ENCODE measurements at regions of chr15 and their contacts with region 1.

Region 1: DNA sequence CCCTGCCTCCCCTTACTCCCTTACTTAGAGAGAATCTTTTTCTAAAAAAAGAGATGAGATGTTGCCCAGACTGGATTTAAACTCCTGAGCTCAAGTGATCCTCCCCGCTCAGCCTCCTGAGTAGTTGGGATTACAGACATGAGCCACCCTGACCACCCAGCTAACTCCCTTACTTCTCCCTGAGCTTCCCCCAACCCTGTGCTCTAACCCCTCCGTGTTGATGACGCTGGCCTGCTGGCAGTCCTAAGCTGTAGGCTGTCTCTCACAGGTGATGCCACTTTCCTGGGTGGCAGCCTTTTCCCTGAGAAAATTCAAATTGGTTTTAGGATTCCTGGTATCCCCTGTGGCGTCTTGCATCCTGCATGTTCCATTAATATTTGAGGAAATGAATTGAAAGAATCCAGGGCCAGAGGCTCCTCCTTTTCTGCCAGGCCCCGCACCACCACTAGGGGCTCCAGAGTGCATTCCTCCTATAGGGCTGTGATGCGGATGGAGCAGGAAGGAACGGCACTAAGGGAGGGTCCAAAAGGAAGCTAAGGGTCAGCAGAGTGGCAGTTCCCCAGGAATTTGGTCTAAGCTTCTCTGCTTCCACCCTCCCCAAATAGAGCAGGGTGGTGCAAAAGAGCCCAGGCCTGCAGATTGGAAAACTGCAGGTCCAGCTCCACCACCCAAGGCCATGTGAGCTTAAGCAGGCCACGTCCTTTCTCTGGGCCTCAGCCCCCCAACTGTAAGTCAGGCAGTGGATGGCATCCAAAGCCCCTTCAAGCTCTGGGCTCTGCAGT is 101.1 kb downstream of the DAPK2 start:
- DNase-seq: peak; percentile 80
- ATAC-seq: peak; percentile 87
- H3K4me3 Mint-ChIP-seq: no peak overlapping the region
- H3K27ac Mint-ChIP-seq: no peak overlapping the region
- H3K4me1 Mint-ChIP-seq: peaks cover 14% of the 10 kb centered on the region
- H3K27me3 Mint-ChIP-seq: no peaks in the 10 kb centered on the region

Region 2: GRCh38 chr15:63905558-63906265 is 39.5 kb before region 1 on chr15:
- CTCF ChIA-PET with region 1: interaction called, 16 read pairs
- POLR2A ChIA-PET with region 1: no interaction called
- DNase-seq: peak; percentile 40
- ATAC-seq: peak; percentile 83
- H3K4me3 Mint-ChIP-seq: no peak overlapping the region
- H3K27ac Mint-ChIP-seq: peak overlapping the region; percentile 88
- H3K4me1 Mint-ChIP-seq: peaks cover 27% of the 10 kb centered on the region
- H3K27me3 Mint-ChIP-seq: no peaks in the 10 kb centered on the region

Region 3: DNA sequence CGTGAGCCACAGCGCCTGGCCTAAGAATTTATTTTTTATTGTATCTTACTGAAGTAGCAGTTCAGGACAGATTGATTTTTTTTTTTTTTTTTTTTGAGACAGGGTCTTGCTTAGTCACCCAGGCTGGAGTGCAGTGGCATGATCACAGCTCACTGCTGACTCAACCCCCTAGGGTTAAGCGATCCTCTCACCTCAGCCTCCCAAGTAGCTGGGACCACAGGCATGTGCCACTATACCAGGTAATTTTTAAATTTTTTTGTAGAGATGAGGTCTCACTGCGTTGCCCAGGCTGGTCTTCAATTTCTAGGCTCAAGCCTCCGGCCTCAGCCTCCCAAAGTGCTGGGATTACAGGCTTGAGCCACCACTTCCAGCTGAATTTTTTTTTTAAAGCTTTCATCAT is 11.7 kb before region 1 on chr15:
- CTCF ChIA-PET with region 1: interaction called, 36 read pairs
- POLR2A ChIA-PET with region 1: no interaction called
- DNase-seq: no peak
- ATAC-seq: no peak
- H3K4me3 Mint-ChIP-seq: no peak overlapping the region
- H3K27ac Mint-ChIP-seq: no peak overlapping the region
- H3K4me1 Mint-ChIP-seq: peaks cover 13% of the 10 kb centered on the region
- H3K27me3 Mint-ChIP-seq: peaks cover 2% of the 10 kb centered on the region

Region 4: GRCh38 chr15:63983061-63983711 is 38.0 kb after region 1 on chr15:
- CTCF ChIA-PET with region 1: interaction called, 16 read pairs
- POLR2A ChIA-PET with region 1: no interaction called
- DNase-seq: no peak
- ATAC-seq: no peak
- H3K4me3 Mint-ChIP-seq: no peak overlapping the region
- H3K27ac Mint-ChIP-seq: no peak overlapping the region
- H3K4me1 Mint-ChIP-seq: no peaks in the 10 kb centered on the region
- H3K27me3 Mint-ChIP-seq: no peaks in the 10 kb centered on the region

Region 5: DNA sequence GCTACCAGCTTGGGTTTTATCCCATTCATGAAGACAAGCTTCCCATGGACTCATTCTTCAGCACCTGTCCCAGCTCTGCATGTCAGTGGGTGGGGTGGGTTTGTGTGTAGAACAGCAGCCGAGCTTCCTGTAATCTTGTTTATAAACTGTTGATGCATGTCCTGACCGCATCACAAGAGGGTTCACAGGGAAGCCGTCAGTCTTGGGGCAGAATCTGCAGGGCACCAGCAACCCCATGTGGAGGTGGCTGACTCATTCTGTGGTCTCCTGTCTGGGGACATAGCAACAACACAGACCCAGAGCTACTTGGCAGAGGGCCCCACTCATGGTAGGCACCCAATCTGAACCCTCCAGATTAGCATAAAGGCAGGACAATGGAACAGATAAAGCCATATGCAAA is 65.5 kb after region 1 on chr15:
- CTCF ChIA-PET with region 1: interaction called, 16 read pairs
- POLR2A ChIA-PET with region 1: no interaction called
- DNase-seq: peak; percentile 92
- ATAC-seq: peak; percentile 100
- H3K4me3 Mint-ChIP-seq: peak overlapping the region; percentile 7
- H3K27ac Mint-ChIP-seq: peak overlapping the region; percentile 75
- H3K4me1 Mint-ChIP-seq: peaks cover 37% of the 10 kb centered on the region
- H3K27me3 Mint-ChIP-seq: peaks cover 5% of the 10 kb centered on the region

Region 6: GRCh38 chr15:64067564-64068030 is 122.4 kb after region 1 on chr15:
- CTCF ChIA-PET with region 1: interaction called, 15 read pairs
- POLR2A ChIA-PET with region 1: no interaction called
- DNase-seq: peak; percentile 79
- ATAC-seq: peak; percentile 89
- H3K4me3 Mint-ChIP-seq: no peak overlapping the region
- H3K27ac Mint-ChIP-seq: peak overlapping the region; percentile 71
- H3K4me1 Mint-ChIP-seq: peaks cover 26% of the 10 kb centered on the region
- H3K27me3 Mint-ChIP-seq: no peaks in the 10 kb centered on the region